H1 (cell line): ENCODE measurements at regions of chr11 and their contacts with region 1.

Region 1: GRCh38 chr11:9314291-9315036 is at the start of gene TMEM41B:
- DNase-seq: peak; percentile 97 to 100
- H3K4me3 ChIP-seq: peak within 1 kb of the TSS; percentile 87 to 94 (median 91)
- H3K27ac ChIP-seq: peak within 1 kb of the TSS; percentile 90
- H3K4me1 ChIP-seq: peaks cover 0 to 8% (median 4%) of the 10 kb centered on the region in 4 experiments; a peak in 5 of 7 replicates
- H3K27me3 ChIP-seq: no peaks in the 10 kb centered on the region
- CTCF ChIP-seq: no peak
- EP300 ChIP-seq: peak in 1 of 2 experiments; percentile 8; a peak in 1 of 3 replicates
- POLR2A ChIP-seq: peak; percentile 81 to 84
- RAD21 ChIP-seq: peak in 1 of 2 experiments; percentile 4; a peak in 1 of 4 replicates
- total RNA-seq, gene TMEM41B: 43.9 and 50.1 TPM in 2 replicates

Region 2: DNA sequence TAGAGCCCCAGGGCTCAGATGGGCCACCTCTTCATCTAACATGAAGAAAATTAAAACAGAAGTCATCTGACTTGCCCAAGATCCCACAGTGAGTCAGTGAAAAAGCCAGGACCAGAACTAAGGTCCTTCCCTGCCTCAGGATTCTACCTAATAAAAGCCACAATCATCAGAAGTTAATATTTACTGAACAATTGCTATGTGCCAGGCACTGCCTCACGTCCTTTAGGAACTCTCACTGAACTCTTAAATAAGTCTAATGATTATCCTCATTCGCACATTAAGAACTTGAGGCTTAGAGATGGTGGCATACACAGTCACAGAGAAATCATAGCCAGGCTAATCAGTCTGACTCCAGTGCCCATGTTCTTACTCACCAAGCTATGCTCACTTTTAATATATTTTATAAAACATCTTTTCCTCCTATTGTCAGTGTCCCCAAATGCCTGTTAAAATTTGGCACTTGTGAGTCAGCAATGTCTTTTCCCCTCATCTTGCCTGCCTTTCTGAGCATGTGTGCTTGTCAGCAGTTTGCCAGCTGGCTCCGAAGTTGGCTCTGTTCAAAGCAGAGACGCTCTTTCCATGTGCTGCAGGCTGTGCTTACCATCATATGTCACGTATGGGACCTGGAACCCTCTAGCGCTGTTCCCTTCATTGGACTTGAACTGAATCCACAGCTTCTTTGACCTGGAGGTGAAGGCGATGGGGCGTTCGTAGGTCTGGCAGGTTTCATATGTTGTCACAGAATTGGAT is 289.2 kb before region 1 on chr11:
- CTCF ChIA-PET with region 1: no interaction called
- POLR2A ChIA-PET with region 1: no interaction called
- DNase-seq: no peak
- H3K4me3 ChIP-seq: no peak overlapping the region
- H3K27ac ChIP-seq: no peak overlapping the region
- H3K4me1 ChIP-seq: no peaks in the 10 kb centered on the region; a peak in 2 of 7 replicates
- H3K27me3 ChIP-seq: no peaks in the 10 kb centered on the region; a peak in 1 of 7 replicates
- CTCF ChIP-seq: no peak
- EP300 ChIP-seq: no peak
- POLR2A ChIP-seq: no peak
- RAD21 ChIP-seq: no peak

Region 3: GRCh38 chr11:9150501-9150900 is 164.0 kb before region 1 on chr11:
- CTCF ChIA-PET with region 1: no interaction called
- POLR2A ChIA-PET with region 1: no interaction called
- DNase-seq: peak in 1 of 2 experiments; percentile 3
- H3K4me3 ChIP-seq: no peak overlapping the region
- H3K27ac ChIP-seq: no peak overlapping the region
- H3K4me1 ChIP-seq: no peaks in the 10 kb centered on the region
- H3K27me3 ChIP-seq: no peaks in the 10 kb centered on the region
- CTCF ChIP-seq: no peak
- EP300 ChIP-seq: no peak
- POLR2A ChIP-seq: no peak
- RAD21 ChIP-seq: no peak

Region 4: DNA sequence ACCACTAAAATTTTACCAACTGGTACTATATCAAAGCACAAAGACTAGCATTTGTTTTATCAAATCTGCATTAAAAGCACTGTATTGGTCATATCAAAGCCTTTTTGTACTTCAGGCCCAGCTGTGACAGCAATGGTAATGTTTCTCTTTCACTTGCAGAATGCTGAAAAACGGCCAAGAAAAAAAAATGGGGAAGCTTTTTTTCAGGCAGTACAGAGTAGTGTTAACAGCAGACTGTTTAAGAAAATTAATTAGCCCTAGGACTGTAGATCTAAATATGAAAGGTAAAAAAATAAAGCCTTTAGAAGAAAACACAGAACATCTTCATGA is 82.7 kb before region 1 on chr11:
- CTCF ChIA-PET with region 1: no interaction called
- POLR2A ChIA-PET with region 1: no interaction called
- DNase-seq: no peak
- H3K4me3 ChIP-seq: peak overlapping the region in 2 of 4 experiments; percentile 15 to 50; a peak in 4 of 8 replicates
- H3K27ac ChIP-seq: no peak overlapping the region
- H3K4me1 ChIP-seq: peaks cover 15 to 27% (median 23%) of the 10 kb centered on the region in 4 experiments; a peak in 6 of 7 replicates
- H3K27me3 ChIP-seq: peaks cover 0 to 13% (median 0%) of the 10 kb centered on the region in 4 experiments; a peak in 4 of 7 replicates
- CTCF ChIP-seq: no peak
- EP300 ChIP-seq: no peak
- POLR2A ChIP-seq: no peak
- RAD21 ChIP-seq: no peak

Region 5: GRCh38 chr11:9363954-9364912 is 49.8 kb after region 1 on chr11:
- CTCF ChIA-PET with region 1: interaction called, 3 read pairs
- POLR2A ChIA-PET with region 1: interaction called, 12 read pairs
- DNase-seq: peak; percentile 88 to 89
- H3K4me3 ChIP-seq: peak overlapping the region; percentile 19 to 59 (median 45)
- H3K27ac ChIP-seq: peak overlapping the region; percentile 92
- H3K4me1 ChIP-seq: peaks cover 4 to 15% (median 10%) of the 10 kb centered on the region in 4 experiments
- H3K27me3 ChIP-seq: no peaks in the 10 kb centered on the region
- CTCF ChIP-seq: no peak
- EP300 ChIP-seq: peak in 1 of 2 experiments; percentile 19; a peak in 1 of 3 replicates
- POLR2A ChIP-seq: peak; percentile 55 to 80; a peak in 2 of 3 replicates
- RAD21 ChIP-seq: no peak

Region 6: DNA sequence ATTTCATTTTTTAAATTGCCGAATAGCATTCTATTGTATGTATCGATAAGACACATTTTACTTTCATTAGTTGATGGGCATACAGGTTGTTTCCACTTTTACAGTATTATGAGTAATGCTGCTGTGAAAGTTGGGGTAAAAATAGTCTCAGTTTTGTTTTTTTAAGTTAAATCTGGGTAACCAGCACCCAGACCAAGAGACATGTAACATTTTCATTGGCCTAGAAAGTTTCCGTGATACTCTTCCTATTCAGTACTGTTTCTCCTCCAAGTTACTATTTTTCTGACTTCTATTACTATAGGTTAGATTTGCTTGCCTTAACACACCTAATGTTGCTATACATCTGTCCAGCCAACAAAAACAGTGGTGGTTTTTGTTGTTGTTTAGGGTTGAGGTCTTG is 82.3 kb after region 1 on chr11:
- CTCF ChIA-PET with region 1: no interaction called
- POLR2A ChIA-PET with region 1: interaction called, 12 read pairs
- DNase-seq: no peak
- H3K4me3 ChIP-seq: no peak overlapping the region
- H3K27ac ChIP-seq: no peak overlapping the region
- H3K4me1 ChIP-seq: peaks cover 0 to 3% (median under 1%) of the 10 kb centered on the region in 4 experiments; a peak in 2 of 7 replicates
- H3K27me3 ChIP-seq: no peaks in the 10 kb centered on the region
- CTCF ChIP-seq: no peak
- EP300 ChIP-seq: no peak
- POLR2A ChIP-seq: no peak
- RAD21 ChIP-seq: no peak